Activated CD4-positive, alpha-beta memory T cell treated with anti-CD3 and anti-CD28 coated beads, Interleukin-2, amount 10 ng/mL, durations not matched to agents 7 days and 5 days (primary cell): ENCODE measurements at regions of chr16 and their contacts with region 1.

Region 1: GRCh38 chr16:50765260-50765659 is 23.4 kb downstream of the CYLD start:
- DNase-seq: no peak
- H3K4me3 Mint-ChIP-seq: no peak overlapping the region
- H3K27ac Mint-ChIP-seq: peak overlapping the region; percentile 67
- H3K4me1 Mint-ChIP-seq: peaks cover 85% of the 10 kb centered on the region
- H3K27me3 Mint-ChIP-seq: no peaks in the 10 kb centered on the region

Region 2: DNA sequence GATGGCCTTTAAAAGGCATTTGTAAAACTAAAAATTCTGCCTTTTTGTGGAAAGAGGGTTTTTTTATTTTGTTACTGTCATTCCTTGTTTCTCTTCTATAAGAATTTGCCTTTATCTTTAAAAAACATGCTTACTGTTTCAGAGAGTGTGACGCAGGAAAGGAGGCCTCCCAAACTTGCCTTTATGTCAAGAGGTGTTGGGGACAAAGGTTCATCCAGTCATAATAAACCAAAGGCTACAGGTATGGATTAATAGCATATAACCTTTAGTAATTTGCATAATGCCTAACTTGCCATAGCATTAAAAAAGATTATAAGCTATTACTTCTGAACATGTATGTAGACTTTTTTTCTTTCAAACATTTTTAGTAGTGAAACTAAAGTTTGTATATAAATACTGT is 10.8 kb after region 1 on chr16:
- CTCF ChIA-PET with region 1: interaction called, 4 read pairs
- POLR2A ChIA-PET with region 1: interaction called, 21 read pairs
- DNase-seq: no peak
- H3K4me3 Mint-ChIP-seq: no peak overlapping the region
- H3K27ac Mint-ChIP-seq: no peak overlapping the region
- H3K4me1 Mint-ChIP-seq: peaks cover 57% of the 10 kb centered on the region
- H3K27me3 Mint-ChIP-seq: no peaks in the 10 kb centered on the region